ENCODE measurements at regions of chr16 and their contacts with region 1.

Region 1: DNA sequence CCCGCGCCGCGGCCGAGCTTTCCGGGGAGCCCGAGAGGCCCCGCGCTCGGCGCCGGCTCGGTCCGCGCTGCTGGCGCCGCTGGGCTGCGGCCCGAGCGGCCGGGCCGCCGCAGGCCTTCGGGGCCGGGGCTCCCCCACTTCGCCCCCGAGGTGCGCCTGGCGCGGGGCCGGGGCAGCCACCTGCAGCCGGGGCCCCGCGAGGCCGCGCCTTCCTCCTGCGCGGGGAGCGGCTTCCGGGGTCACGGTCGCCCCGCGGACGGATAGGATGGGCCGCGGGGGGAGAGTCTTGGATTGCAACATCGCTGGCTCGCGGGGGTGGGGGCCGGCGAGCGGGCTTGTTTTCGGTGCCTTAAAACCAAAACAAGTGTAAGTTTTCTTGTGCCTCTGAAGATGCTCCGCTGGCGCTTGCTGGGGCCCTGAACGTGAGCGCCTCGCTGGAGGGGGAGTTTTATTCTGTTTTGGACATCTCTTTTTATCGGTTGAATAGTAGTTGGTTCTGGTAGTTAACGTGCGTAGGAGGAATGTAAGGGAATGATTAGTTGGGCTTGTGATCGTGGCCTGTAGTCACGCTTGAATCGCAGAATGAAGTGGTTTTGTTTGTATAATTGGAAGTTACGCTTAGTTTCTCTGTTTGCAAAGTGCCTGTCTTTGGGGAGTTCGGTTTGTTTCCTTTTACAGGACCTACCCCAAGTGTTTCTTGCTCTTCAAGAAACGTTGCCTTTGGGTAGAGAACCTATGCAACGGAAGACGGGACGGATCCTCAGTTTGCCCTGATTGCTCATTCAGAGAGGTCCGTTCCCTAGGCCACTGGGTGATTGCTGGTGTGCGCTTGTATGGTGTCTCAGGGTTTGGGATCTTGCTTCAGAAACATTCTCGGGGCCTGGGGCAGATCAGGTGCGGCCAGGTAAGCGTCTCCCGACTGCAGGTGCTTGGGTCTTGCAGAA is 724 bp downstream of the UBE2I start:
- DNase-seq: peak; percentile 82 to 89 (median 83)
- H3K4me3 ChIP-seq: peak overlapping the region; percentile 76
- H3K27ac ChIP-seq: peak overlapping the region; percentile 7 to 98
- H3K4me1 ChIP-seq: peaks cover 27% of the 10 kb centered on the region
- H3K27me3 ChIP-seq: no peaks in the 10 kb centered on the region
- CTCF ChIP-seq: no peak
- EP300 ChIP-seq: no peak
- POLR2A ChIP-seq: no peak

Region 2: DNA sequence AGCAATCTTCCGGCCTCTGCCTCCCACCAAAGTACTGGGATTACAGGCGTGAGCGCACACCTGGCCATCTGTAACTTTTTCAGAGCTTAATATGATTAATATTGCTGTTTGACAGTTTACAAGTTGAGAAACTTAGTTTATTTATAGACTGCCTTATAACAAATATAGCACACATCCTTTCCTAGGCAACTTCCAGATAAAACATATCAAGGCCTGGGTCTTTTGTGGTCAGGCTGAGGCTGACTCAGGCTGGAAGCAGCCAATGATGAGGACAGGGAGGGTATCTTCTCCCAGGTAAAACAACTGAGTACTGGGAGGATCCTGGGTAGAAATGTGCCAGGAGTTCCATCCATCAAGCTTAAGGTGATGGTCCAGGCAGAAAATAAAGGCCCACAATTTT is 1097.2 kb before region 1 on chr16:
- intact Hi-C with region 1: no loop called
- DNase-seq: no peak
- H3K4me3 ChIP-seq: no peak overlapping the region
- H3K27ac ChIP-seq: no peak overlapping the region
- H3K4me1 ChIP-seq: no peaks in the 10 kb centered on the region
- H3K27me3 ChIP-seq: no peaks in the 10 kb centered on the region
- CTCF ChIP-seq: no peak
- EP300 ChIP-seq: no peak
- POLR2A ChIP-seq: no peak

Region 3: DNA sequence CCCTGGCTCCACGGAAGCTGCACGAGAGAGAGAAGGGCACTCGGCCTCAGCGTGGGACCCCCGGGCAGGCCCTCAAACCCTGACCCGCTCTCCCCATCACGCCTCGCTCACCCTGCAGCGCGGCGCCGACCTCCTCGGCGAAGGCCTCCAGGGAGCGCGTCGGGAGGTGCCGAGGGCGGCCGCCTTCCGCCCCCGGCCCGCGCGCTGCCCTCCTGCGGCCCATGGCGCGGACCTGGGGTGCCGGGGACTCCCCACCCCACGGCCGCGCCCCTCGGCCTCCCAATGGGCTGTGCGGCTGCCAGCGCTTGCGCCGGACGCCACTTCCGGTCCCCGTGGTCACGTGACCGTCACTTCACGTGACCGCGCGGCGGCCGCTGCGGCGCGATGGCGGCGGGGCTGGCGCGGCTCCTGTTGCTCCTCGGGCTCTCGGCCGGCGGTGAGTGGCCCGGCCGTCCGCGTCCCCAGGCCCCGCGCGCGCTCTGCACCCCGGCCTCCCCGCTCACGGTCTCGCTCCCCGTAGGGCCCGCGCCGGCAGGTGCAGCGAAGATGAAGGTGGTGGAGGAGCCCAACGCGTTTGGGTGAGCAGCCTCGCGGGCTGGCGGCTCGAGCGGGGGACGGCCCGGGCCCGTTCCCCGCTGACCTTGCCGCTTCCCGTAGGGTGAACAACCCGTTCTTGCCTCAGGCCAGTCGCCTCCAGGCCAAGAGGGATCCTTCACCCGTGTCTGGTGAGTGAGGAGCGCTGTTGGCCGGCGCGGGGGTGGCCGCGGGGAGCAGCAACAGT is 41.6 kb after region 1 on chr16 and contains the starts of genes GNPTG and TSR3:
- intact Hi-C with region 1: loop called in 1 of 4 experiments (anchors 2 kb)
- DNase-seq: peak; percentile 80 to 92 (median 89)
- H3K4me3 ChIP-seq: peak within 1 kb of the TSS; percentile 99
- H3K27ac ChIP-seq: peak within 1 kb of the TSS in 1 of 2 donors; percentile 27
- H3K4me1 ChIP-seq: peaks cover 18% of the 10 kb centered on the region
- H3K27me3 ChIP-seq: no peaks in the 10 kb centered on the region
- CTCF ChIP-seq: no peak
- EP300 ChIP-seq: no peak
- POLR2A ChIP-seq: peak; percentile 55
- total RNA-seq, gene GNPTG: 47.8 to 68.1 (median 55.4) TPM
- total RNA-seq, gene TSR3: 28.6 to 74.6 (median 41.5) TPM